Colonic mucosa (tissue), 4 donors: ENCODE measurements at regions of chr1 and their contacts with region 1.

Region 1: DNA sequence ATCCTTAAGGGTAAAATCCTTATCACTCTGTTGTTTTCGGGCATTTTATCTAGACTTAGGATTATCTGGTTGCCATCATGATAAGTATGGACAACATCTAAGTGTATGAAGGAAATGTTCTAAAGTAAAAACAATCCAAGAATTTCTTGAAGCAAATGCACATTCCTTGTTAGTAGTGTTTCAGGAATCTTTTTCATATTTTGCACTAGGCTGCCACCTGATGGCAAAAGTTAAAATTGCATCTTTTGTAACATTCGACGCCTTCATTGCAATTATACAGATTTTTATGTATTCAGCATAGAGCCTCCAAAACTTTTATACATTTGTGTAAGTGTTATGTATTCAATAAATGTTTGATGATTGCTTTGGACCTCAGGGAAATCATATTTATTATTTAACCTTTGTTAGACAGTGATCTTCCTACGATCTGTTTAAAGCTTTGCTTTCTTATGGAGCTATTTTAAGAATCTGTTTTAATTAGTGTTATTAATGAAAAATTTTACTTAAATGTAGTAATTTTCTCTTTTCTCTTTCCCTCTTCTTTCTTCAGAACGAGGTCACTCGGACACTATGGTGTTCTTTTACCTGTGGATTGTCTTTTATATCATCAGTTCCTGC is 49.4 kb upstream of the KIAA1614 start:
- DNase-seq: peak; percentile 47
- H3K4me3 ChIP-seq: no peak overlapping the region
- H3K27ac ChIP-seq: no peak overlapping the region
- H3K4me1 ChIP-seq: no peaks in the 10 kb centered on the region
- H3K27me3 ChIP-seq: no peaks in the 10 kb centered on the region
- CTCF ChIP-seq: peak; percentile 67

Region 2: GRCh38 chr1:180515864-180516388 is 347.3 kb before region 1 on chr1:
- intact Hi-C with region 1: loop called (anchors 5 kb)
- DNase-seq: peak; percentile 72
- H3K4me3 ChIP-seq: no peak overlapping the region
- H3K27ac ChIP-seq: no peak overlapping the region
- H3K4me1 ChIP-seq: no peaks in the 10 kb centered on the region
- H3K27me3 ChIP-seq: no peaks in the 10 kb centered on the region
- CTCF ChIP-seq: peak; percentile 78

Region 3: DNA sequence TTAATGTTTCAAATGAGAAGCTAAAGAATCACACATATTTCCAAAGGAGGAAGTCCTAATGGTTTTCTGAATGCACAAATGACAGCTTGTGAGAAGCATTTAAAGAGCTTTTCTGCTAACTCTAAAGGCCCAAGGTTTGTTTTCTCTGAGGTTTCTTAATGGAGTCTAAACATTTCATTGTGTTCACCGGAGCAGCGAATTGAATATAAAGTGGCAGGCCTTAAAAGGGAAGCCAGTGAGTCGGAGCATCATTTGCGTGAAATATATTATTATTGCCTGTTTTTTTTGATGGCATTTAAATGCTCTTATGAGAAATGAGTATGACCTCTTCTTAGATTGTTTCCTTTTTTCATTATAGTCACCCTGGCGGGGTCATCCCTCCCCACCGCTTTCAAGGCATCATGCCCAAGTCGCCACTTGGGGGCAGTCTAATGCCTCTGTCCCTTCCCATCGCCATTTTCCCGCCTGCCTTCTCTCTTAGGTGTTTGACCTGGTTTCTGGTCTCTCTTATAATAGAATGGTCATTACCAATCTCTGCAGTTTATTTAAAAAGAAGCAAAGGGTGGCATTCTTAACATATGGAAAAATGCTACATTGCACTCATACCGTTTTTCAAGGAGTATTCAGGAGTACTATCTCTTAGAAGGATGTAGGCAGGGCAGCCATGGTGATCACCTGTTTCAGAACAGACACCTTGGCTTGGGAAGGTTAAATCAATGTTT is 329.8 kb before region 1 on chr1:
- intact Hi-C with region 1: loop called (anchors 5 kb)
- DNase-seq: peak; percentile 70
- H3K4me3 ChIP-seq: no peak overlapping the region
- H3K27ac ChIP-seq: no peak overlapping the region
- H3K4me1 ChIP-seq: no peaks in the 10 kb centered on the region
- H3K27me3 ChIP-seq: no peaks in the 10 kb centered on the region
- CTCF ChIP-seq: peak; percentile 80

Region 4: GRCh38 chr1:180631766-180632325 is 231.4 kb before region 1 on chr1 and contains the start of gene XPR1:
- intact Hi-C with region 1: loop called (anchors 10 kb)
- DNase-seq: peak; percentile 99
- H3K4me3 ChIP-seq: peak within 1 kb of the TSS; percentile 84
- H3K27ac ChIP-seq: peak within 1 kb of the TSS; percentile 95
- H3K4me1 ChIP-seq: peaks cover 6% of the 10 kb centered on the region
- H3K27me3 ChIP-seq: no peaks in the 10 kb centered on the region
- CTCF ChIP-seq: peak; percentile 21
- total RNA-seq, gene XPR1: 20.5 to 25.8 TPM

Region 5: GRCh38 chr1:180805316-180805715 is 58.0 kb before region 1 on chr1:
- intact Hi-C with region 1: no loop called
- DNase-seq: no peak
- H3K4me3 ChIP-seq: no peak overlapping the region
- H3K27ac ChIP-seq: no peak overlapping the region
- H3K4me1 ChIP-seq: no peaks in the 10 kb centered on the region
- H3K27me3 ChIP-seq: no peaks in the 10 kb centered on the region
- CTCF ChIP-seq: no peak